Ovary (tissue), 10 donors: ENCODE measurements at regions of chr11 and their contacts with region 1.

Region 1: DNA sequence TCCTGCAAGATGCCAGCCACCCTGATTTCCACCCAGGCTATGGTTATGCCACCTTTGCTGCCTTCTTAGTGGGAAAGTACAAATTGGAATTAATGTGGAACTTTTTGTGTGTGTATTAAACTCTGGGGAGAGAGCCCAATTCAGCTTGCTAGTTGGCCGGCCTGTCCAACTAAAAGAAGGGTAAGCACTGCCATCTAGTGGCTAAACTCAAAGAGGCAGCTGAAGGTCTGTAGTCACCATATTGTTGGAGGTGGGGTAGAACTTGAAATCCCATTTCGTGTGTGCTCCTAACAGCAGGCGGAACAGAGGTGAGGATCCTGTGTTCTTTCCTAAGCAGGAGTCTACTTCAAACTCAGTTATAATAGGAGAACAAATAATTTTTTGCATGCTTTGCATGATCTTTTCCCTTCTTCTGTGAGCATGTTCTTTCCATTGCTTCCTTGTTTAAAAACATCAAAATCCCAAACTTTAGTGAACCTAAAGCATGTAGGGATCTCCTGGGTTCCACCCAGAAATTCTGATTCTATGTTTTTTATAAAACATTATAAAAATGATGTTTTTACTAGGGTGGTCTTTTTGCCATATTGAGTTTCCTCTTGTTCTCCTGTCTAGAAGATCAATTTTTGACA is 138.8 kb upstream of the SORL1-AS1 start:
- DNase-seq: peak; percentile 47 to 79 (median 60)
- H3K4me3 ChIP-seq: no peak overlapping the region
- H3K27ac ChIP-seq: no peak overlapping the region
- H3K4me1 ChIP-seq: no peaks in the 10 kb centered on the region
- H3K27me3 ChIP-seq: no peaks in the 10 kb centered on the region
- CTCF ChIP-seq: peak; percentile 29 to 82 (median 77)
- EP300 ChIP-seq: no peak
- POLR2A ChIP-seq: no peak

Region 2: GRCh38 chr11:121451986-121452608 is 139.4 kb before region 1 on chr11 and contains the start of gene SORL1:
- intact Hi-C with region 1: loop called in 2 of 4 experiments (anchors 5 to 10 kb)
- DNase-seq: peak; percentile 70 to 89 (median 78)
- H3K4me3 ChIP-seq: peak within 1 kb of the TSS; percentile 80
- H3K27ac ChIP-seq: no peak within 1 kb of the TSS
- H3K4me1 ChIP-seq: peaks cover 3% of the 10 kb centered on the region
- H3K27me3 ChIP-seq: no peaks in the 10 kb centered on the region
- CTCF ChIP-seq: peak in 2 of 3 donors; percentile 79 to 80
- EP300 ChIP-seq: no peak
- POLR2A ChIP-seq: no peak
- total RNA-seq, gene SORL1: 10.5 to 64.5 (median 29.8) TPM